ENCODE measurements at regions of chr14 and their contacts with region 1.

Region 1: DNA sequence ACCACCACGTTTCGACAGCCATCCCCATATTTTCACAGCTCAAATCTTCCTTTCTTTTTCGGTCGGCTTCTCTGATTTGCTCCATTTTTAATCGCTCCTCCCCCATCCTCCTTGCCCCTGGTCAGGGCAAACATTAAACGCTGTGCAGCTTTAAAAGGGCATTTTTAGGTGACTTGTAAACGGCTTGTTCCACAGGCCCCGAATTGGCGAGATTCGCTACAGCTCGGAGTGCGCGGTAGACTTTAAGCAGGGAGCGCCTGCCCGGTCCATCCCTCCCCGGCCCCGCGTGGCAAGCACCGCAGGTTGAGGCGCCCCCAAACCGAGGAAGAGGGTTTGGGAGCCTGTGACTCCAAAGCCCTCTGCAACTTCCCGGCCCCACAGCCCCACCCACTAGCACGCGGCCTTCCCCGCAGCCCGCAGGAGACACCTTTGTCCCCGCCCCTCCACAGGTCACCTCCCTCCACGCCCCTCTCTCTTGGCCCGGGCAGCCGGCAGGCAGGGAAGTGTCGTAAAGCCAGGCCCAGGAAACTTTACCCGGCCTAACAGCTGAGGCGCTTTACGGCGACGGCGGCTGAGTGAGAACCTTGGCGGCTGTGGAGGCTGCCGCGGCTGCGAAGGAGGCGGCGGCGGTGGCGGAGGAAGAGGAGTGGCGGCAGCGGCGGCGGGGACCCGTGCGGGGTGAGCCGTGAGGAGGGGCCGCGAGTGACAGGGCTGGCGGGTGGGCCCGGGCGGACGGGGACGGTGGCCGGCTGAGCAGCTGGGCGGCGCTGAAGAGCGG is at the start of gene NAA30:
- DNase-seq: peak; percentile 92
- H3K4me3 ChIP-seq: peak within 1 kb of the TSS; percentile 36 to 95 (median 94)
- H3K27ac ChIP-seq: peak within 1 kb of the TSS; percentile 56
- H3K4me1 ChIP-seq: peaks cover 20% of the 10 kb centered on the region
- H3K27me3 ChIP-seq: no peaks in the 10 kb centered on the region
- CTCF ChIP-seq: no peak
- POLR2A ChIP-seq: peak; percentile 13
- total RNA-seq, gene NAA30: 21.8 and 22.1 TPM in 2 replicates

Region 2: GRCh38 chr14:56579345-56580220 is 810.6 kb before region 1 on chr14 and contains the start of gene TMEM260:
- CTCF ChIA-PET with region 1: no interaction called
- POLR2A ChIA-PET with region 1: no interaction called
- dilution Hi-C with region 1: no loop called
- intact Hi-C with region 1: loop called (anchors 10 kb)
- DNase-seq: peak; percentile 91
- H3K4me3 ChIP-seq: peak within 1 kb of the TSS; percentile 32 to 89 (median 81)
- H3K27ac ChIP-seq: peak within 1 kb of the TSS; percentile 73
- H3K4me1 ChIP-seq: peaks cover 8% of the 10 kb centered on the region
- H3K27me3 ChIP-seq: peaks cover 0 to under 1% of the 10 kb centered on the region in 2 experiments
- CTCF ChIP-seq: peak; percentile 86 to 88
- POLR2A ChIP-seq: peak; percentile 85
- total RNA-seq, gene TMEM260: 16.2 and 16.4 TPM in 2 replicates

Region 3: DNA sequence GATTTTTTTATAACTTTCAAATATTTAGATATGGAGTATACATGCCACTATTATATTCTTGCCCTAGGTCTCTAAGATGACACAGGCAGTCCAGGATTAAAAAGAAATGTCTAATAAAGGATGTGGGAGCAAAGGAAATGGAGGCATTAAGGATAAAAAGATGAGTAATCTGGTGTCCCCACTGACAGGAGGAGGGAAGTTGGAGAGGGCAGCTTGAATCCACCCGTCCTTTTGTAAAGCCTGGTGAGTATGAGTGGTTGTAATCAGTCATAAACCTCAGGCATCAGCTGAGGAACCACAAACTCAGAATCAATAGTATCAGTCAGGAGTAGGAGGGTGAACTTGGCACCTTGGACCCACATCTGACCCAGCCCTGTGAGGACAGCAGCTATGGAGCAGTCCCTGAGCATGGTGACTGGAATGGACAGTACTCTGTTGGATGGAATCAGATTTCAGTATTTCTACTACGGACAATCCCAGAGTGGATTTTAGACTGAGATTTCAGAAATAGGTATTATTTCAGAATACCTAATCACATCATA is 222.0 kb before region 1 on chr14:
- CTCF ChIA-PET with region 1: no interaction called
- POLR2A ChIA-PET with region 1: no interaction called
- dilution Hi-C with region 1: no loop called
- intact Hi-C with region 1: no loop called
- DNase-seq: no peak
- H3K4me3 ChIP-seq: no peak overlapping the region
- H3K27ac ChIP-seq: no peak overlapping the region
- H3K4me1 ChIP-seq: no peaks in the 10 kb centered on the region
- H3K27me3 ChIP-seq: no peaks in the 10 kb centered on the region
- CTCF ChIP-seq: no peak
- POLR2A ChIP-seq: no peak

Region 4: DNA sequence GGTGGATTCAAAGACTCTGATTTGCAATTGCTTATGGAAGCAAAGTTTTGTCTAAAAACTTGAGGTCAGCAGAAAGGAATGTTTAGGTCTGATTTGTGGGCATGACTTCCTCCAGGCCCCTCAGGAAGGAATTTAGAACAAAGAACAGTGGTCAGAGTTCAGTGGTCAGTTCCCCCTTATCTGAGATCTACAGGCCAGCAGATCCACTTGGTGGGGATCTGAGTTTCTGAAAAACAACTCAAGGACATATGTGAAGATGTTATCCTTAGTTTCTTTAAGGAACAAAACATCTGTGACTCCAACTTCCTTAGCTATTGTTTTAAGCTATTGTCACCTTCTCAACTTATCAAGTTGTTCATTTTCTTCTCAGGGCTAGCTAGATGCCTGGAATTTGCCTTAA is 27.9 kb before region 1 on chr14:
- CTCF ChIA-PET with region 1: interaction called, 7 read pairs
- POLR2A ChIA-PET with region 1: interaction called, 5 read pairs
- dilution Hi-C with region 1: no loop called
- intact Hi-C with region 1: loop called (anchors 1 kb)
- DNase-seq: peak; percentile 94
- H3K4me3 ChIP-seq: no peak overlapping the region
- H3K27ac ChIP-seq: peak overlapping the region; percentile 89
- H3K4me1 ChIP-seq: peaks cover 28% of the 10 kb centered on the region
- H3K27me3 ChIP-seq: no peaks in the 10 kb centered on the region
- CTCF ChIP-seq: no peak
- POLR2A ChIP-seq: peak; percentile 77

Region 5: GRCh38 chr14:57401501-57401900 is 11.3 kb after region 1 on chr14:
- CTCF ChIA-PET with region 1: interaction called, 4 read pairs
- POLR2A ChIA-PET with region 1: interaction called, 3 read pairs
- dilution Hi-C with region 1: no loop called
- intact Hi-C with region 1: loop called (anchors 1 kb)
- DNase-seq: no peak
- H3K4me3 ChIP-seq: no peak overlapping the region
- H3K27ac ChIP-seq: no peak overlapping the region
- H3K4me1 ChIP-seq: no peaks in the 10 kb centered on the region
- H3K27me3 ChIP-seq: no peaks in the 10 kb centered on the region
- CTCF ChIP-seq: no peak
- POLR2A ChIP-seq: no peak

Region 6: GRCh38 chr14:57412341-57412740 is 22.1 kb after region 1 on chr14:
- CTCF ChIA-PET with region 1: interaction called, 4 read pairs
- POLR2A ChIA-PET with region 1: no interaction called
- dilution Hi-C with region 1: no loop called
- intact Hi-C with region 1: loop called (anchors 1 kb)
- DNase-seq: peak; percentile 23
- H3K4me3 ChIP-seq: no peak overlapping the region
- H3K27ac ChIP-seq: no peak overlapping the region
- H3K4me1 ChIP-seq: peaks cover 3% of the 10 kb centered on the region
- H3K27me3 ChIP-seq: no peaks in the 10 kb centered on the region
- CTCF ChIP-seq: no peak
- POLR2A ChIP-seq: no peak

Region 7: DNA sequence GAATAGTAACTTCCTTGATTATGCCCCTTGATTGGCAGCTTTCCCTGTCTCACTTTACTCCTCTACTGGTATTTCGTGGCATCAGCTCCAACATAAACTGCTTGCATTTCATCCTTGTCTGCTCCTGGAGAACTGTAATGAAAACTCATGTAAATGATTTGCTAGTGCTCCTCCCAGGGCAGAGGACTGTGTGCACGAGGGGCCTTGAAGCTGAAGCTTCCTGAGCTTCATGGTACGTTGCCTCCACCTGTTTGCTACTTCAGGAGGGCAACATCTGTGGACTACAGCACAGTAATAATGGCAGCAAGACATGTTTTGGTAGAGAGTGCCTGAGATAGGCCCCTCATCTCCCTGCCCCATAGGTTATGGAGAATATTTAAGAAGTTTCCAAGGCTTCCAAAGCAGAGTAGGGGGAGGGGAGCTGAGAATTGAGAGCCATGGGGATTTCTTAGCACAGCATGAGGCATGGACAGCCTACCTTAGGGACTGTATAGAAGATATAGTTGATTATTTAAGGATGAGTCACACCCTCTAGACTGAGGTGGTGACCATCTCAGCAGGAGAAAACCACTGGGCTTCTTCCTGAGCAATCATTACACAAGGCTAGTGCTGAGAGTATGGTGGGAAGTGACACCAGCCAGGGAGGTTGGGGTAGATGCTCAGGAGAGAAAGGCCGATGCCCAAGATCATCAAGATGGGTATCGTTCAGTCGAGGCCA is 74.0 kb after region 1 on chr14:
- CTCF ChIA-PET with region 1: no interaction called
- POLR2A ChIA-PET with region 1: no interaction called
- dilution Hi-C with region 1: no loop called
- intact Hi-C with region 1: no loop called
- DNase-seq: no peak
- H3K4me3 ChIP-seq: no peak overlapping the region
- H3K27ac ChIP-seq: no peak overlapping the region
- H3K4me1 ChIP-seq: no peaks in the 10 kb centered on the region
- H3K27me3 ChIP-seq: no peaks in the 10 kb centered on the region
- CTCF ChIP-seq: no peak
- POLR2A ChIP-seq: no peak

Region 8: DNA sequence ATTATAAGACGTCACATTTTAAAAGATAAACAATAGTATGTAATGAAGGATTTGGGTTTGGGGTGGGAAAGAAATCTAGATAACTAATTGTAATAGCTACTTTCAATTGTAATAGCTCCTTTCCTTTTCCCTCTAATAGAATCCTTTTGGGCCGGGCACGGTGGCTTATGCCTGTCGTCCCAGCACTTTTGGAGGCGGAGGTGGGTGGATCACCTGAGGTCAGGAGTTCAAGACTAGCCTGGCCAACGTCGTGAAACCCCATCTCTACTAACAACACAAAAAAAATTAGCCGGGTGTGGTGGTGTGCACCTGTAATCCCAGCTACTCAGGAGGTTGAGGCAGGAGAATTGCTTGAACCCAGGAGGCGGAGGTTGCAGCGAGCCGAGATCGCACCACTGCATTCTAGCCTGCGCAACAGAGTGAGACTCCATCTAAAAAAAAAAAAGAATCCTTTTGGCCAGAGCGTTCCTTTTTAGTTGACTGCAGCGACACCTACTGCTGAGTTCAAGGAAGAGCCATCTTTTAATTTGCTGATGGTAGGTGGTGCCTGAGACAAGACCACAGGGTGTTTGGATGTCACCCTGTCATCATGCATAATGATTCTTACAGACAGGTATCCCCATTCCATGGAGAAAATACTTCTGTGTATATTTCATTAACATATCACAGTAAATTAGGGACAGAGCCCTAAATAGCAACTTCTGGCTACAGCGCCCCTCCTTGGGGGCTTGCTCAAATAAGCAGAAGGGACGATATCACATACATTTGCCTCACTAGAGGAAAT is 682.3 kb after region 1 on chr14:
- CTCF ChIA-PET with region 1: no interaction called
- POLR2A ChIA-PET with region 1: no interaction called
- dilution Hi-C with region 1: no loop called
- intact Hi-C with region 1: loop called (anchors 10 kb)
- DNase-seq: peak; percentile 68
- H3K4me3 ChIP-seq: no peak overlapping the region
- H3K27ac ChIP-seq: no peak overlapping the region
- H3K4me1 ChIP-seq: no peaks in the 10 kb centered on the region
- H3K27me3 ChIP-seq: peaks cover 8 to 14% of the 10 kb centered on the region in 2 experiments
- CTCF ChIP-seq: peak; percentile 50 to 67
- POLR2A ChIP-seq: no peak